ENCODE measurements at regions of chrX and their contacts with region 1.

Region 1: DNA sequence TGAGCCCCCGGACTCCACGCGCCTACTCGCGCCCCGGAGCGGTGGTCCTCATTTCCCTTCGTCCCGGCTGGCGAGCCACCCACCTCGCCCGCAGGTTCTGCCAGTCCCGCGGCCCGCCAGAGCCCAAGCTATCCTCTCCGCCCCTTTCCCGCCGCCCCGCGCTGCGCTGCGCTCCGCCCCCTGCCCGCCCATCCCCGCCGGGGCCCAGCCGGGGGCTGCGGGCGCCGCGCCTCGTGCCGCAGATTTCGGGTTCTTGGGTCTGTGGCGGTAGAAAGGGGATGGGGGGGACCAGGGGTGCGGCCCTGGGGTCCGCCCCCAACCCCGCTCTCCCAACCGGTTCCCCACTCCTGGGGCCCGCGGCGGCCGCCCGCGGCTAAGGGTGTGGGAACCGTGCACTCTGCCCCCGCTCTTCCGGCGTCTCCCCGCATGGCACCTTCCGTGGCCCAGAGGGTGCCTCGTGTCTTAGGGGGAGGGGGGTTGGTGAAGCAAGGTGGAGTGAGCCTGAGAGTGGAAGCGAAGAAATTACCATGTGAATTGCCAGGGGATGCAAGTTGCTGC is 650.8 kb upstream of the DIPK2B start:
- DNase-seq: peak; percentile 38 to 57
- H3K4me3 ChIP-seq: peak overlapping the region; percentile 79
- H3K4me3 Mint-ChIP-seq: peak overlapping the region; percentile 97
- H3K27ac Mint-ChIP-seq: no peak overlapping the region
- H3K4me1 ChIP-seq: no peaks in the 10 kb centered on the region
- H3K4me1 Mint-ChIP-seq: no peaks in the 10 kb centered on the region
- H3K27me3 ChIP-seq: no peaks in the 10 kb centered on the region
- H3K27me3 Mint-ChIP-seq: no peaks in the 10 kb centered on the region
- CTCF ChIP-seq: no peak

Region 2: DNA sequence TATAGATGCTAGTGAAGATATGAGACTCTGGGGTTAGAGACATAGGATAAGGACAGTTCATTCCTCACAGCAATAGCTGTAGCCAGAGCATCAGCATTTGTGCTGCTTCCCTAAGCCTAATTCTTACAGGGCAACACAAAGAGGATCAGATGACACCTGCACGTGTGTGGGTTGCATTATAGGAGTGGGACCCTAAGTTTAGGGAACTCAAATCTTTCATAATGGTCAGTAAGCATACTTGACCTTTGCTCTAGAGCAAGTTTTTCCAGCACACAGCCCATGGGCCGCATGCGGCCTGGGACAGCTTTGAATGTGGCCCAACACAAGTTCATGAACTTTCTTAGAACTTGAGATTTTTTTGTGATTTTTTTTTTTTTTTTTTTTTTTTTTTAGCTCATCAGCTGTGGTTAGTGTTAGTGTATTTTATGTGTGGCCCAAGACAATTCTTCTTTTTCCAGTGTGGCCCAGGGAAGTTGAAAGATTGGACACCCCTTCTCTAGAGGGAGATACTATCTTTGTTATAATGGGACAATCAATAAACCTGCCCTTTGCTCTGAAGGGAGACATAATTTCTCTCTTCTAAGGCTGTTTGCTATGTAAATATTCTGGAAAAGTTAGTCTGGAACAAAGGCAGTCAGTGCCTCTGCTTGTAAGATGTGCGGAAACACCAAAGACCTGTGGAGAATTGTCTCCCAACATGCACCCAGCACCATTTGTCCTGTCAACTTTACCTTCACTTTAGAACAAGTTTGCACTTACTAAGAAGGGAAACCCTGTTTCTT is 43.5 kb after region 1 on chrX:
- CTCF ChIA-PET with region 1: no interaction called
- POLR2A ChIA-PET with region 1: no interaction called
- intact Hi-C with region 1: loop called (anchors 1 kb)
- DNase-seq: no peak
- H3K4me3 ChIP-seq: no peak overlapping the region
- H3K4me3 Mint-ChIP-seq: no peak overlapping the region
- H3K27ac Mint-ChIP-seq: no peak overlapping the region
- H3K4me1 ChIP-seq: no peaks in the 10 kb centered on the region
- H3K4me1 Mint-ChIP-seq: no peaks in the 10 kb centered on the region
- H3K27me3 ChIP-seq: no peaks in the 10 kb centered on the region
- H3K27me3 Mint-ChIP-seq: no peaks in the 10 kb centered on the region
- CTCF ChIP-seq: no peak

Region 3: GRCh38 chrX:46321676-46322075 is 470.2 kb after region 1 on chrX:
- CTCF ChIA-PET with region 1: no interaction called
- POLR2A ChIA-PET with region 1: no interaction called
- intact Hi-C with region 1: loop called (anchors 5 kb)
- DNase-seq: no peak
- H3K4me3 ChIP-seq: no peak overlapping the region
- H3K4me3 Mint-ChIP-seq: peak overlapping the region; percentile 38
- H3K27ac Mint-ChIP-seq: peak overlapping the region; percentile 93
- H3K4me1 ChIP-seq: peaks cover 77% of the 10 kb centered on the region
- H3K4me1 Mint-ChIP-seq: peaks cover 21% of the 10 kb centered on the region
- H3K27me3 ChIP-seq: no peaks in the 10 kb centered on the region
- H3K27me3 Mint-ChIP-seq: no peaks in the 10 kb centered on the region
- CTCF ChIP-seq: no peak

Measured in Caco-2 (cell line).